K562 (cell line): ENCODE measurements at regions of chr5 and their contacts with region 1.

Region 1: GRCh38 chr5:140547508-140548299 is at the start of gene EIF4EBP3:
- DNase-seq: peak; percentile 86 to 95 (median 90)
- ATAC-seq: peak; percentile 94
- H3K4me3 ChIP-seq: peak within 1 kb of the TSS; percentile 3; the same call in 1 of the 2 replicates
- H3K27ac ChIP-seq: peak within 1 kb of the TSS; percentile 61
- H3K4me1 ChIP-seq: peaks cover 34 to 35% of the 10 kb centered on the region in 2 experiments
- H3K27me3 ChIP-seq: no peaks in the 10 kb centered on the region; a peak in 1 of 5 replicates
- CTCF ChIP-seq: peak; percentile 51 to 72 (median 64)
- EP300 ChIP-seq: no peak
- POLR2A ChIP-seq: peak; percentile 44
- RAD21 ChIP-seq: peak; percentile 43 to 54
- polyA plus RNA-seq, gene EIF4EBP3: 5.0 to 7.5 TPM

Region 2: DNA sequence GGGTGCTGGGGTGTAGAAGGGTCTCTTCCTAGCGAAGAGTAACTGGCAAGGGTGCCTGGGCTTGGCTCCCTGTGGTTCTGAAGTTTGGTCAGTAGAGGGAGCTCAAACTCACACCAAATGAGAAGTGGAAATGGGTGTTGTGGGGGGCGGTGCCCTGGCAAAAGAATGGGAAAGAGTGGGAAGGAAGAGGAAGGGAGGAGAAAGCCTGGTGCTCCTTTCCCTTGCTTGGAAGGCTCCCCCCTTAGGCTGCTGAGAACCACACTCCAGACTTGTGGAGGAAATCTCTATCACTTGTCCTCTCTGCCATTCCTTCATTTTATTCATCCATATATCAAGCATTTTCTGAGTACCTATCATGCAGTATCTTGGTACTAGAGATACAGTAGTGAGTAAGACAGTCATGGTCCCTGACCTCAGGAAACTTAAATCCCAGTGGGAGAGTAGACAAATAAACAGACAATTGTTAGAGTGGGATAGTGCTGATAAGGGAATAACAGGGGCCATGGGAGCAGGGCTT is 174.7 kb before region 1 on chr5:
- CTCF ChIA-PET with region 1: no interaction called
- POLR2A ChIA-PET with region 1: interaction called, 5 read pairs
- in situ Hi-C with region 1: no loop called
- intact Hi-C with region 1: loop called (anchors 5 kb)
- DNase-seq: peak; percentile 62 to 78 (median 75)
- ATAC-seq: peak; percentile 87
- H3K4me3 ChIP-seq: no peak overlapping the region
- H3K27ac ChIP-seq: no peak overlapping the region
- H3K4me1 ChIP-seq: peaks cover 6 to 7% of the 10 kb centered on the region in 2 experiments; a peak in 2 of 5 replicates
- H3K27me3 ChIP-seq: no peaks in the 10 kb centered on the region
- CTCF ChIP-seq: peak; percentile 68 to 87 (median 80)
- EP300 ChIP-seq: no peak
- POLR2A ChIP-seq: no peak
- RAD21 ChIP-seq: peak; percentile 53 to 79

Region 3: DNA sequence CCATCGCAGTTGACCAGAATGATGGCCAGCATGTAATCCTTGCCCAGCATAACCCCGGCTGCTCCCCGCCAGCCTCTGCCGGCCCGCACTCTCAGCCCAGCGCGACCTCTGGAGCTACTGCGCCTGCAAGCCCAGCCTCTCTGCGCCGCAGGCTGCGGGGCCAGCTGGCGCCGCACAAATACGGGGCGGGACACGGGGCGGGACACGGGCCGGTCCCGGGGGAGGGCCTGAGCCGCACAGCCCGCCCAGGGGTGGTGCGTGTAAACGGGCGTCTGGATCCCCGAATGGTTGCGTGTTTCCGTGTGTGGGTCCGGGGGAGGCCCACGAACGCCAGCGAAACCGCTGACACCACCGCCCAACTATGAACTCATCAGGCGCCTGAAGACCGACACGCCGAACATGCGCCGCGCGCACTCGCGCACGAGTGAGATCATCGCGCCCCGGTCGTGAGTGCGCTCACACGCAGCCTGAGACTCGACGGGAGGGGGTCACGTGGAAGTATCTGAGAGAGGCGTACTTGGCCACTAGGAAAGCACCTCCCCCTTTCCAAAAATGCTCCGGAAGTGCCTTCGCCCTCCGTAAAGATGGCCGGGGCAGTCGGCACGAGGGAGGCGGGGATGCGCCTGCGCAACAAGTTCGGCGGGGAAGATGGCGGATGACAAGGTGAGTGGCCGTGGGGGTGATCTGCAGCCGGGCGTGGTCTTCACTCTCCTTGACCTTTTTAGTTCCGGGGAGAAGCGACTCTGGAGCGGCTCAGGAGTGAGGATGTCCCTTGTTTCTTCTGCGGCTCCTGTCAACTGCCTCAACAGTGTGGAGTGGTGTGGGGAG is 16.7 kb after region 1 on chr5 and contains the starts of genes APBB3 and SLC35A4:
- CTCF ChIA-PET with region 1: no interaction called
- POLR2A ChIA-PET with region 1: interaction called, 46 read pairs
- in situ Hi-C with region 1: no loop called
- intact Hi-C with region 1: no loop called
- DNase-seq: peak; percentile 92 to 99 (median 94)
- ATAC-seq: peak; percentile 94
- H3K4me3 ChIP-seq: peak within 1 kb of the TSS; percentile 75
- H3K27ac ChIP-seq: peak within 1 kb of the TSS; percentile 98
- H3K4me1 ChIP-seq: peaks cover 26 to 40% of the 10 kb centered on the region in 2 experiments
- H3K27me3 ChIP-seq: no peaks in the 10 kb centered on the region
- CTCF ChIP-seq: 0 out of 6 replicates have a peak, but pooled peaks of 1 of the 3 experiments have one; percentile 12
- EP300 ChIP-seq: peak; percentile 58
- POLR2A ChIP-seq: peak; percentile 93
- RAD21 ChIP-seq: 0 out of 4 replicates have a peak, but pooled peaks of 1 of the 2 experiments have one; percentile 12
- polyA plus RNA-seq, gene APBB3: 0.17 to 0.67 TPM
- polyA plus RNA-seq, gene SLC35A4: 30.0 to 42.5 TPM

Region 4: GRCh38 chr5:140725799-140726471 is 178.2 kb after region 1 on chr5:
- CTCF ChIA-PET with region 1: no interaction called
- POLR2A ChIA-PET with region 1: interaction called, 10 read pairs
- in situ Hi-C with region 1: no loop called
- intact Hi-C with region 1: no loop called
- DNase-seq: peak; percentile 73 to 96 (median 84)
- ATAC-seq: peak; percentile 98
- H3K4me3 ChIP-seq: peak overlapping the region; percentile 83
- H3K27ac ChIP-seq: peak overlapping the region; percentile 94
- H3K4me1 ChIP-seq: no peaks in the 10 kb centered on the region; a peak in 1 of 5 replicates
- H3K27me3 ChIP-seq: no peaks in the 10 kb centered on the region
- CTCF ChIP-seq: no peak; a peak in 1 of 6 replicates
- EP300 ChIP-seq: peak; percentile 88
- POLR2A ChIP-seq: peak; percentile 74
- RAD21 ChIP-seq: no peak